ENCODE measurements at regions of chr1 and their contacts with region 1.

Region 1: GRCh38 chr1:45499415-45499769 is 481 bp downstream of the CCDC163 start:
- H3K4me3 ChIP-seq: peak overlapping the region; percentile 56
- H3K27ac ChIP-seq: no peak overlapping the region; the same call in 1 of the 2 replicates
- H3K4me1 ChIP-seq: no peaks in the 10 kb centered on the region
- CTCF ChIP-seq: no peak

Region 2: GRCh38 chr1:45478121-45478814 is 21.1 kb before region 1 on chr1:
- CTCF ChIA-PET with region 1: no interaction called
- POLR2A ChIA-PET with region 1: no interaction called
- H3K4me3 ChIP-seq: no peak overlapping the region
- H3K27ac ChIP-seq: no peak overlapping the region
- H3K4me1 ChIP-seq: peaks cover 5% of the 10 kb centered on the region
- CTCF ChIP-seq: no peak

Region 3: GRCh38 chr1:45512641-45513054 is 13.3 kb after region 1 on chr1:
- CTCF ChIA-PET with region 1: interaction called, 10 read pairs
- POLR2A ChIA-PET with region 1: interaction called, 11 read pairs
- H3K4me3 ChIP-seq: no peak overlapping the region
- H3K27ac ChIP-seq: no peak overlapping the region
- H3K4me1 ChIP-seq: no peaks in the 10 kb centered on the region
- CTCF ChIP-seq: no peak